ENCODE measurements at regions of chr1 and their contacts with region 1.

Region 1: GRCh38 chr1:119675349-119676345 is 27.6 kb upstream of the ZNF697 start:
- DNase-seq: peak; percentile 90
- H3K4me3 ChIP-seq: peak overlapping the region; percentile 43
- H3K27ac ChIP-seq: no peak overlapping the region
- H3K4me1 ChIP-seq: peaks cover 17% of the 10 kb centered on the region
- H3K27me3 ChIP-seq: no peaks in the 10 kb centered on the region
- CTCF ChIP-seq: peak; percentile 92

Region 2: GRCh38 chr1:119286587-119287181 is 389.0 kb before region 1 on chr1:
- CTCF ChIA-PET with region 1: no interaction called
- POLR2A ChIA-PET with region 1: no interaction called
- intact Hi-C with region 1: loop called (anchors 10 kb)
- DNase-seq: peak; percentile 71
- H3K4me3 ChIP-seq: no peak overlapping the region
- H3K27ac ChIP-seq: no peak overlapping the region
- H3K4me1 ChIP-seq: no peaks in the 10 kb centered on the region
- H3K27me3 ChIP-seq: no peaks in the 10 kb centered on the region
- CTCF ChIP-seq: peak; percentile 83

Region 3: GRCh38 chr1:119573886-119574285 is 101.8 kb before region 1 on chr1:
- CTCF ChIA-PET with region 1: no interaction called
- POLR2A ChIA-PET with region 1: no interaction called
- intact Hi-C with region 1: no loop called
- DNase-seq: no peak
- H3K4me3 ChIP-seq: no peak overlapping the region
- H3K27ac ChIP-seq: no peak overlapping the region
- H3K4me1 ChIP-seq: no peaks in the 10 kb centered on the region
- H3K27me3 ChIP-seq: no peaks in the 10 kb centered on the region
- CTCF ChIP-seq: no peak

Region 4: DNA sequence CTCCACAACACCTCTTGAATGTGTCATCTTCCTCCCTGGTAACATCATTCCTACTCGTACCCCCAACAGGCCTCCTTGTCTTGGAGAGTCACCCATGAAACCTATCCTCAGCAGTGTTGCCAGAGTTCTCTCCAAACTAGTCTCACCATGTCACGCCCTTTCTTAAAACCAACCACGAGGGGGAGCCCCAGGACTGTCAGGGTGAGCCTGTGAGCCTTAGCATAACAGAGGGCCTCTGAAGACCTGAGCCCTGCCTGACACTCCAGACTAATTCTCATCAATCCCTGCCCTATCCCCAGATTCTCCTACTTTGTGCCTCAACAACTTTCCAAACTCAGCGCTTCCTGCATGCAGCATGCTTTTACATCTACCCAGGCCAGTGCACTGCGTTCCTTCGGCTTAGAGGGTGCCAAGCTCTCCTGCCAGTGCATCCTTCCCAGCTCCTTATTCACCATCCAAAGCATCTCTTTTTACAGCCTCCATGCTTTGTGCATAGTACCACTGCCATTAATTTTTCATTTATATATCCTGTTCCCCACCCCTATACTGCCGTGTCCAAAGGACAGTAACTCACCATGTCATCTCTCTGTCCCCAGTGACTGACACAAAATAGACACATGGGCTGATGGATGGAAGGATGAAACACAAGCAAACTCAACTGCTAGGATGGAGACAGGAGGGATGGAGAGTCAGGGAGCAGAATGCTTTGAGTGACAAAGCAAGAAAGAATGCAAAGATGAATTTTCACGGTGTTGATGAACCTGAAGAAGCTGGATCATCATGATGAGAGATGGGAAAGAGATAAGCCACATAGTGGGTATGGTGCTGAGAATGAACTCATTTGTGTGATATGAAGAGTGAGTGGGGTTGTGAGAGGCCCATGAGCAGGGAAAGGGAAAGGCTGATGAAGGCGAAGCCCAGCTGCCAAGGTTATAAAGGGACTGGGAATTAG is 61.6 kb before region 1 on chr1:
- CTCF ChIA-PET with region 1: interaction called, 17 read pairs
- POLR2A ChIA-PET with region 1: no interaction called
- intact Hi-C with region 1: loop called (anchors 2 kb)
- DNase-seq: peak; percentile 88
- H3K4me3 ChIP-seq: no peak overlapping the region
- H3K27ac ChIP-seq: no peak overlapping the region
- H3K4me1 ChIP-seq: no peaks in the 10 kb centered on the region
- H3K27me3 ChIP-seq: no peaks in the 10 kb centered on the region
- CTCF ChIP-seq: peak; percentile 75

Region 5: DNA sequence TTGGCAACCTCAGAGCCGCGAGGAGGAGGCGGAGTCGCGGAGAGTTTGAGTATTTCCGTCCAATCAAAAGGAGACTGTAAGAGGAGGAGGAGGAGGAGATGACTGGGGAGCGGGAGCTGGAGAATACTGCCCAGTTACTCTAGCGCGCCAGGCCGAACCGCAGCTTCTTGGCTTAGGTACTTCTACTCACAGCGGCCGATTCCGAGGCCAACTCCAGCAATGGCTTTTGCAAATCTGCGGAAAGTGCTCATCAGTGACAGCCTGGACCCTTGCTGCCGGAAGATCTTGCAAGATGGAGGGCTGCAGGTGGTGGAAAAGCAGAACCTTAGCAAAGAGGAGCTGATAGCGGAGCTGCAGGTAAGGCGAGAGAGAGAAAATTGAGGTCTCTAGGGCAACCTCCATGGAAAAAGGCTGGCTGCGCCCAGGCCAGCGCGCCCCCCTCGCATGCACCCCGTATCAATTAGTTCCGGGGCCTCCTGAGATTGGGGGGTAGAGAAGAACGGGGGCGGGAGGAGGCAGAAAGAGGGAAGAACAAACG is 36.2 kb after region 1 on chr1 and contains the start of gene PHGDH:
- CTCF ChIA-PET with region 1: interaction called, 11 read pairs
- POLR2A ChIA-PET with region 1: interaction called, 10 read pairs
- intact Hi-C with region 1: loop called (anchors 2 kb)
- DNase-seq: peak; percentile 96
- H3K4me3 ChIP-seq: peak within 1 kb of the TSS; percentile 83
- H3K27ac ChIP-seq: peak within 1 kb of the TSS; percentile 95
- H3K4me1 ChIP-seq: peaks cover 40% of the 10 kb centered on the region
- H3K27me3 ChIP-seq: no peaks in the 10 kb centered on the region
- CTCF ChIP-seq: no peak
- total RNA-seq, gene PHGDH: 499 and 575 TPM in 2 replicates

Measured in A673 (cell line).